ENCODE measurements at regions of chr3 and their contacts with region 1.

Region 1: GRCh38 chr3:112984485-112984884 is 6.3 kb upstream of the GTPBP8 start:
- DNase-seq: no peak
- ATAC-seq: no peak

Region 2: GRCh38 chr3:112582244-112582874 is 402.1 kb before region 1 on chr3:
- intact Hi-C with region 1: loop called (anchors 10 kb)
- DNase-seq: no peak
- ATAC-seq: no peak

Region 3: GRCh38 chr3:112642912-112643506 is 341.5 kb before region 1 on chr3:
- intact Hi-C with region 1: loop called (anchors 5 kb)
- DNase-seq: peak; percentile 88
- ATAC-seq: peak; percentile 83